CD8-positive, alpha-beta T cell (primary cell): ENCODE measurements at regions of chr12 and their contacts with region 1.

Region 1: GRCh38 chr12:49623142-49623904 is at the start of gene PRPF40B:
- DNase-seq: peak; percentile 68 to 92 (median 84)
- ATAC-seq: peak; percentile 78
- H3K4me3 ChIP-seq: peak within 1 kb of the TSS; percentile 56 to 82
- H3K4me3 Mint-ChIP-seq: peak within 1 kb of the TSS; percentile 88
- H3K27ac ChIP-seq: peak within 1 kb of the TSS; percentile 56 to 63
- H3K27ac Mint-ChIP-seq: peak within 1 kb of the TSS; percentile 91
- H3K4me1 ChIP-seq: peaks cover 34% of the 10 kb centered on the region
- H3K4me1 Mint-ChIP-seq: peaks cover 27% of the 10 kb centered on the region
- H3K27me3 ChIP-seq: no peaks in the 10 kb centered on the region
- H3K27me3 Mint-ChIP-seq: no peaks in the 10 kb centered on the region
- CTCF ChIP-seq: peak; percentile 46
- total RNA-seq, gene PRPF40B: 3.4 to 4.2 TPM

Region 2: DNA sequence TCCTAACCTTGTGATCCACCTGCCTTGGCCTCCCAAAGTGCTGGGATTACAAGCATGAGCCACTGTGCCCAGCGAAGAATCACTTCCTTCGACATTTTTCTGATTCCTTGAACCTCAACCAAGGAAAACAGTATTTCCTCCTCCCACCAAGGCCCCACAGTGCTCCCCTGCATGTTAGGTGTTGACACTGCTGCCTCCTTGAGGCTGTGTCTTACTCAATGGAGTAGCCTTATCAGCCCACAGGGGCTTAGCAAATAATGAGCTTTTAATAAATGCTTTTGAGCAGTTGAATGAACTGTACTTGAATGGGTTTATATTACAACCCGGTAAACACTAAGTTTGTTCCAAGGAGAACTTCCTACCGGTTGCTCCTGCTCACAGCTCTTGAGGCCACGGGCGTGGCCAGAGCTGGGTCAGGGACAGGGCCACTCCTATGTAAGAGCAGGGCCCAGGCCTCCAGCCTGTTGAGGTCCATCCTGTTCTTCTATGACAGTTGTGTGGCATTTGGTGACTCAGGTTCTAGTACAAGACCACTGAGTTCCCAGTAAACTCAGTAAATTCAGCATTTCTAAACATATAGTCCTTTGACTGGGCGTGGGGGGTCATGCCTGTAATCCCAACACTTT is 397.7 kb before region 1 on chr12:
- CTCF ChIA-PET with region 1: no interaction called
- POLR2A ChIA-PET with region 1: no interaction called
- intact Hi-C with region 1: no loop called
- DNase-seq: no peak
- ATAC-seq: no peak
- H3K4me3 ChIP-seq: no peak overlapping the region
- H3K4me3 Mint-ChIP-seq: no peak overlapping the region
- H3K27ac ChIP-seq: no peak overlapping the region
- H3K27ac Mint-ChIP-seq: no peak overlapping the region
- H3K4me1 ChIP-seq: no peaks in the 10 kb centered on the region
- H3K4me1 Mint-ChIP-seq: no peaks in the 10 kb centered on the region
- H3K27me3 ChIP-seq: no peaks in the 10 kb centered on the region
- H3K27me3 Mint-ChIP-seq: no peaks in the 10 kb centered on the region
- CTCF ChIP-seq: no peak

Region 3: GRCh38 chr12:49331380-49332222 is 291.7 kb before region 1 on chr12:
- CTCF ChIA-PET with region 1: no interaction called
- POLR2A ChIA-PET with region 1: no interaction called
- intact Hi-C with region 1: no loop called
- DNase-seq: peak in 2 of 9 experiments; percentile 44 to 52
- ATAC-seq: peak; percentile 70
- H3K4me3 ChIP-seq: no peak overlapping the region
- H3K4me3 Mint-ChIP-seq: no peak overlapping the region
- H3K27ac ChIP-seq: no peak overlapping the region
- H3K27ac Mint-ChIP-seq: no peak overlapping the region
- H3K4me1 ChIP-seq: peaks cover 5% of the 10 kb centered on the region
- H3K4me1 Mint-ChIP-seq: peaks cover 12% of the 10 kb centered on the region
- H3K27me3 ChIP-seq: peaks cover 15 to 18% of the 10 kb centered on the region in 2 experiments
- H3K27me3 Mint-ChIP-seq: peaks cover 38% of the 10 kb centered on the region
- CTCF ChIP-seq: peak; percentile 49

Region 4: DNA sequence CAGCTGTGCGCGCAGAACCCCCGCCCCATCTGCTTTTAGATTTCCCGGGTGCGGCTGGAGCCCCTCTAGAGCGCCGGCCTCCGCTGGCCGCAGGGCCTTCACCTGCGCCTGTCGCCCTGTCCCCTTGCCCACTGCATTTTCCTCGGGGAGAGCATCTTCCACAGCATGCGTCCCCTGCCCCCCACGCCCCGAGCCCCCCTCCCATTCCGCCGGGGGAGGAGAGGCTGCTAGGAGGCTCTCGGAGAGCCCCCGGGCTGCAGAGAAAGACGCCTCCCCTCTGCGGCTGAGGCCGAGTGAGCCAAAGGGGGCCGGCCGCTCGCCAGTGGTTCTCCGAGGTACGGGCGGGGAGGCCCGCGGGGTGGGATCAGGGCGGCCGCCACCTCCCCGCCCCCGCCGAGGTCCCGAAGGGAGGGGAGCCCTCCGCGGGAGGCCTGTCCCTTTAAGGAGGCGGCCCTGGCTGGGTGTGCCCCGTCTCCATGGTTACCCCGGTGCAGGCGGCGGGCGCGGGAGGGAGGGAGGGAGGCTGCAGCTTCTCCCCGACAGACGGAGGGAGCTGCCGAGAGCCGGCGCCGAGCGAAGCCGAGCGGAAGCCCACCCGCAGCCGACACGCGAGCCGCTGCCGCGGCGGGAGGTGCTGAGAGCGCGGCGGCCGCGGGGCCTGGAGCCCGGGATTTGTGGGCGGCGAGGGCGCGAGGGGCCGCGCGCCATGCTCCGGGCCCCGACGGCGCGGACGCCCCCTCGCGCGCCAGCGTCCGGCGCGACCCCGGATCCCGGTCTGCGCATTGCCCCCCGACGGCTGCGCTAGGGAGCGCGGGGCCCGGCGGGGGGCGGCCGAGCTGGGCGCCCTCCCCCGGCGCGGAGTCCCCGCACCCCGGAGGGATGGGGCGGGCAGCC is 84.6 kb before region 1 on chr12 and contains the start of gene KCNH3:
- CTCF ChIA-PET with region 1: no interaction called
- POLR2A ChIA-PET with region 1: no interaction called
- intact Hi-C with region 1: loop called in 1 of 2 experiments (anchors 2 kb)
- DNase-seq: peak; percentile 79 to 95 (median 91)
- ATAC-seq: peak; percentile 90
- H3K4me3 ChIP-seq: peak within 1 kb of the TSS; percentile 49 to 76
- H3K4me3 Mint-ChIP-seq: peak within 1 kb of the TSS; percentile 80
- H3K27ac ChIP-seq: no peak within 1 kb of the TSS
- H3K27ac Mint-ChIP-seq: no peak within 1 kb of the TSS
- H3K4me1 ChIP-seq: peaks cover 23% of the 10 kb centered on the region
- H3K4me1 Mint-ChIP-seq: peaks cover 33% of the 10 kb centered on the region
- H3K27me3 ChIP-seq: peaks cover 0 to 6% of the 10 kb centered on the region in 2 experiments
- H3K27me3 Mint-ChIP-seq: no peaks in the 10 kb centered on the region
- CTCF ChIP-seq: no peak
- total RNA-seq, gene KCNH3: 3.1 to 3.5 TPM

Region 5: GRCh38 chr12:49580572-49581535 is 42.5 kb before region 1 on chr12:
- CTCF ChIA-PET with region 1: interaction called, 4 read pairs
- POLR2A ChIA-PET with region 1: no interaction called
- intact Hi-C with region 1: loop called in 1 of 2 experiments (anchors 2 kb)
- DNase-seq: peak in 8 of 9 experiments; percentile 43 to 69 (median 61)
- ATAC-seq: peak; percentile 86
- H3K4me3 ChIP-seq: no peak overlapping the region
- H3K4me3 Mint-ChIP-seq: no peak overlapping the region
- H3K27ac ChIP-seq: no peak overlapping the region
- H3K27ac Mint-ChIP-seq: no peak overlapping the region
- H3K4me1 ChIP-seq: no peaks in the 10 kb centered on the region
- H3K4me1 Mint-ChIP-seq: peaks cover 11% of the 10 kb centered on the region
- H3K27me3 ChIP-seq: no peaks in the 10 kb centered on the region
- H3K27me3 Mint-ChIP-seq: no peaks in the 10 kb centered on the region
- CTCF ChIP-seq: peak; percentile 69

Region 6: GRCh38 chr12:49644620-49644994 is 21.3 kb after region 1 on chr12:
- CTCF ChIA-PET with region 1: interaction called, 7 read pairs
- POLR2A ChIA-PET with region 1: interaction called, 4 read pairs
- intact Hi-C with region 1: loop called in 1 of 2 experiments (anchors 1 kb)
- DNase-seq: peak; percentile 71 to 91 (median 87)
- ATAC-seq: peak; percentile 98
- H3K4me3 ChIP-seq: no peak overlapping the region
- H3K4me3 Mint-ChIP-seq: no peak overlapping the region
- H3K27ac ChIP-seq: peak overlapping the region in 1 of 2 experiments; percentile 57
- H3K27ac Mint-ChIP-seq: peak overlapping the region; percentile 92
- H3K4me1 ChIP-seq: peaks cover 12% of the 10 kb centered on the region
- H3K4me1 Mint-ChIP-seq: peaks cover 35% of the 10 kb centered on the region
- H3K27me3 ChIP-seq: no peaks in the 10 kb centered on the region
- H3K27me3 Mint-ChIP-seq: no peaks in the 10 kb centered on the region
- CTCF ChIP-seq: peak; percentile 93

Region 7: DNA sequence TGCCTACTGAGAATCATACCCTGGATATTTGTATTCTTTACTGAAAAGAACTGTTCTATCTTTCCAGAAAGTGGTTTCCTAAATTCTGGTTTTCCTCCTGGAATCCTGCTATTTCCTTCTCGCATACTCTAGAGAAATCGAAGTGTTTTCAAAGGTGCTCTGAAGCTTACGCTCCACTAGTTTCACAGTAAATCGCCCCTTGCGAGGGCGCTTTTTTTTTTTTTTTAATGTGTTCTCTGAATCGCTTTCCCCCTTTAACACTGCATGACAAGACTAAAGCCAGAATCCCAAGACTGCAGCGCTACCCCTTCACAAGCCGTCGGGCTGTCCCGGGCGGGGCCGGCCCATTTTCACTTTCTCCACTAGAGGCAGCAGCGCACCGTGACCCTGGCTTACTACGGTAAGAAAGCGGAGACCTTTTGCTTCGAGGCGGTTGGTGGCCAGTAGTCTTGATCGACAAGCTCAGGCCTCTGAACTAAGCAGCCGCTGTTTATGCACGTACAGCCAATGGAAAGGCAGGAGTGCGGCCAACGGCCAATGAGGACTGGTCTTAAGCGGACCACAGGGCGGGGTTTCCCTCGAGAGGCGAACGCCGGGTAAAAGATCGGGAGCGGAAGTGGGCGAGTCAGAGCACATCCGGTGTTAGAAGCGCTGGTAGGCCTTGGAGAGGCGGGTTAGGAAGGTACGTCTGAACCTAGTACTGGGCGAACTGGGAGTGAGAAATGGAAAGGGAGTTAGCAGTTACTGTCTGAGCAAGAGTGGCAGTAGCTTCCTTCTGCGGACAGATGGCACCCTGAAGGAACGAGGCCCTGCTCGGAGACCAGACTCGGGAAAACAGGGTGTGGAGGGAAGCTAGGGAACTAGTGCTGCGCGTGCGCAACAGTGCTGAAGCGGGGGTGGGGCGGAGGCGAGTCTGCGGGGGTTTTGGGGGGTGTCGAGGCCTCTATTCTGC is 117.9 kb after region 1 on chr12 and contains the start of gene TMBIM6:
- CTCF ChIA-PET with region 1: interaction called, 4 read pairs
- POLR2A ChIA-PET with region 1: interaction called, 4 read pairs
- intact Hi-C with region 1: loop called in 1 of 2 experiments (anchors 1 kb)
- DNase-seq: peak; percentile 96 to 100 (median 98)
- ATAC-seq: peak; percentile 86
- H3K4me3 ChIP-seq: peak within 1 kb of the TSS; percentile 63 to 88
- H3K4me3 Mint-ChIP-seq: peak within 1 kb of the TSS; percentile 93
- H3K27ac ChIP-seq: peak within 1 kb of the TSS; percentile 96 to 99
- H3K27ac Mint-ChIP-seq: peak within 1 kb of the TSS; percentile 98
- H3K4me1 ChIP-seq: peaks cover 38% of the 10 kb centered on the region
- H3K4me1 Mint-ChIP-seq: peaks cover 41% of the 10 kb centered on the region
- H3K27me3 ChIP-seq: no peaks in the 10 kb centered on the region
- H3K27me3 Mint-ChIP-seq: no peaks in the 10 kb centered on the region
- CTCF ChIP-seq: peak; percentile 93
- total RNA-seq, gene TMBIM6: 289 to 309 TPM

Region 8: GRCh38 chr12:49800421-49801140 is 177.3 kb after region 1 on chr12:
- CTCF ChIA-PET with region 1: no interaction called
- POLR2A ChIA-PET with region 1: no interaction called
- intact Hi-C with region 1: no loop called
- DNase-seq: no peak
- ATAC-seq: no peak
- H3K4me3 ChIP-seq: no peak overlapping the region
- H3K4me3 Mint-ChIP-seq: no peak overlapping the region
- H3K27ac ChIP-seq: no peak overlapping the region
- H3K27ac Mint-ChIP-seq: no peak overlapping the region
- H3K4me1 ChIP-seq: no peaks in the 10 kb centered on the region
- H3K4me1 Mint-ChIP-seq: no peaks in the 10 kb centered on the region
- H3K27me3 ChIP-seq: no peaks in the 10 kb centered on the region
- H3K27me3 Mint-ChIP-seq: no peaks in the 10 kb centered on the region
- CTCF ChIP-seq: no peak

Region 9: DNA sequence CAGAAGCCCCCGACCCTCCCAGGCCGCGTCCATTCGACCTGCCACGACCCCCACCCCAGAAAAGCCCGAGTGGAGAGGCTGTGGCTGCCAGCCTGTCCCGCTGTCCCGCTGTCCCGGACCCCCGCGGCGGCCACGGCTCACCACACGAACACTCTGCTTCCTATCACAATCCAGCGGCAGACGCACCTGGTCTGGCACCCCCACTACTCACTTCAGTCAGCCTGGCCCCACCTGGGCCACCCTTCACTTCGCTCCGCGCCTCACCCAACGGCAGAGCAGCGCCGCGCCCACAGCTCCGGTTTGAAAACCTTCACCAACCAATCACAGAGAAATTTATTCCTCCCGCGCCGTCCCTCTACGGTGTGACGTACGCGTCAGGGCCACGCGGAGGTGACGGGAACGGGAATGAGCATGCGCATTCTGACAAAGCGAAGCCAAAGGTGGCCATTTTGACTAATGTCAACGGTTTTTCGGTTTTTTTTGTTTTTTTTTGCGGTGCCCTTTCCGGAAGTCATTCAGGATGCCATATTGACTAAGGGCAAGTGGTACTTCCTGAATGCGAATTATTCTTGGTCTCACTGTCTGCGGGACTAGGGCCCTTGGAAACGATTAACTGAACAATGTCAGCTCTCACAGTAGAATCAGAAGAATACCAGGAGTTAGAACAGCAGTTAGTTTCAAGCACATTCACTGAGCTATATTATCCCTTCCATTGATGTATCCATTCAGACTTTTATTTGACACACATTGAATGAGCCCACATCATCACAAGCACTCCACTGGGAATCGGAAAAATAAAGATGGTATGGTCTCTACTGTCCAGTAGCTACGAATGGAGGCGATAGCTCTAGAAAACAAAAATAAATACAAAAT is 402.1 kb after region 1 on chr12 and contains the start of gene RACGAP1:
- CTCF ChIA-PET with region 1: no interaction called
- POLR2A ChIA-PET with region 1: no interaction called
- intact Hi-C with region 1: loop called in 1 of 2 experiments (anchors 5 kb)
- DNase-seq: peak; percentile 88 to 99 (median 94)
- ATAC-seq: peak; percentile 97
- H3K4me3 ChIP-seq: peak within 1 kb of the TSS; percentile 62 to 78
- H3K4me3 Mint-ChIP-seq: peak within 1 kb of the TSS; percentile 98
- H3K27ac ChIP-seq: peak within 1 kb of the TSS; percentile 38 to 63
- H3K27ac Mint-ChIP-seq: peak within 1 kb of the TSS; percentile 86
- H3K4me1 ChIP-seq: no peaks in the 10 kb centered on the region
- H3K4me1 Mint-ChIP-seq: peaks cover 16% of the 10 kb centered on the region
- H3K27me3 ChIP-seq: no peaks in the 10 kb centered on the region
- H3K27me3 Mint-ChIP-seq: no peaks in the 10 kb centered on the region
- CTCF ChIP-seq: no peak
- total RNA-seq, gene RACGAP1: 2.2 to 2.8 TPM